ENCODE measurements at regions of chr11 and their contacts with region 1.

Region 1: GRCh38 chr11:6234387-6235107 is at the start of gene FHIP1B:
- DNase-seq: peak; percentile 100
- ATAC-seq: peak; percentile 95
- H3K4me3 Mint-ChIP-seq: peak within 1 kb of the TSS; percentile 95
- H3K27ac Mint-ChIP-seq: peak within 1 kb of the TSS; percentile 93
- H3K4me1 Mint-ChIP-seq: peaks cover 39% of the 10 kb centered on the region
- H3K27me3 Mint-ChIP-seq: no peaks in the 10 kb centered on the region
- total RNA-seq, gene FHIP1B: 17.0 to 17.1 TPM

Region 2: GRCh38 chr11:5624489-5625279 is 609.9 kb before region 1 on chr11 and contains the start of gene TRIM34:
- CTCF ChIA-PET with region 1: no interaction called
- POLR2A ChIA-PET with region 1: no interaction called
- intact Hi-C with region 1: loop called in 1 of 2 experiments (anchors 10 kb)
- DNase-seq: peak; percentile 72
- ATAC-seq: peak; percentile 95
- H3K4me3 Mint-ChIP-seq: peak within 1 kb of the TSS; percentile 87
- H3K27ac Mint-ChIP-seq: peak within 1 kb of the TSS; percentile 95
- H3K4me1 Mint-ChIP-seq: peaks cover 35% of the 10 kb centered on the region
- H3K27me3 Mint-ChIP-seq: no peaks in the 10 kb centered on the region
- total RNA-seq, gene TRIM34: 10.4 to 11.8 TPM

Region 3: DNA sequence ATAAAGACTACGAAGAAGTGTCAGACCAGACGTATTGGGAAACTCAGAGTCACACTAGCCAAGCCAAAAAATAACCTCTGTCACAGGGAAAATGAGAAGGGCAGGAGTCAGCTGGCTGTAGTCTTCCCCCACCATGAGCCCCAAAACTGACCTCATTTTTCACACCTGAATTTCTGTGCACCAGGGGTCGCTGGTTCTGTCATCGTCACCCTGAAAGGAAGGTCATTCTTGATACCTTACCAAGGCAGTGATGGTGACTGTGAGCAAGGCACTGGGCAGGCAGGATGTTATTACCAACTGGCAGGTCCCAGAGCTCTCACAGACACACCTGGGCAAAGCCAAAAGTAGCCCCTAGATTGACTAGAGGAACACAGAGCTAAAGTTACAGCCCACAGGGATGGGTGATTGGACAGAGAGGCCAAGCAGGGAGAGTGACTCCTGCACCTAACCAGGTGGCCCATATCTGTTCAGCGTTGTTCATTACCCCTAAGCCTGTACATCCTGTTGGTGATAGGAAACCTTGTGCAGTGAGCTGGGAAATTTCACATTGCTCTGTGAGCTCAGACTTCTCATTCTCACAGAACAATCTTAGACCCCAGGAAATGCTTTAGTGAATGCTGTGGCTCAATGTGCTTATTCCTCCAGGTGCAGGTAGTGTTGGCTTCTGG is 171.7 kb before region 1 on chr11:
- CTCF ChIA-PET with region 1: no interaction called
- POLR2A ChIA-PET with region 1: no interaction called
- intact Hi-C with region 1: no loop called
- DNase-seq: no peak
- ATAC-seq: no peak
- H3K4me3 Mint-ChIP-seq: no peak overlapping the region
- H3K27ac Mint-ChIP-seq: no peak overlapping the region
- H3K4me1 Mint-ChIP-seq: no peaks in the 10 kb centered on the region
- H3K27me3 Mint-ChIP-seq: peaks cover 6% of the 10 kb centered on the region

Region 4: DNA sequence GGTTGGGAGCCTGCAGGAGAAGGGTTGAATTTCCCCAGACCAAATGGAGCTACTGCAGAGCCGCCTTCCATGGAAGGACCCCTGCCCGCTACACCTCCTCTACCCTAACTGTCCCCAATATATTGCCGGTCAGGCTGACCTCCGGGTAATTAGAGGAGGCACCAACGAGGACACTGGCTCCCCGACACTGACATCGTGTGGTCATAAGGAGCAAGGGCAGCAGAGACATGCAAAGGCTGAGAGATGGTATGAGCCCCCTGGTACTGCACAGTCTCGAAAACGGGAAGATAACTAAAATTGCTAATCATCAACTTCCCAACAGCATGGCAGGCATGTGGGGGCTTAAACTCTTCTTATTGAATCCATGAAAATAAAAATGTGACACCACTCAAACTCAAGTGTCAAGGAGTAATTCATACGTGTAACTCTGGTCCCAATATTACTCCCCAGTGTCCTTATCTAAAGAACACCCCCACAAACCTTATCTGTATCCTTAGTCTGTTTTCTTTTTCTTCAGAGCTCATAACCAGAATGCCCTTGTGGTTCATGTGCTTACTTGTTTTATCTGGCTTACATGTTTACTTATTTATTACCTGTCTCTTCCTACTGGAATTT is 81.4 kb after region 1 on chr11:
- CTCF ChIA-PET with region 1: interaction called, 3 read pairs
- POLR2A ChIA-PET with region 1: no interaction called
- intact Hi-C with region 1: loop called in 1 of 2 experiments (anchors 1 kb)
- DNase-seq: peak; percentile 59
- ATAC-seq: peak; percentile 33
- H3K4me3 Mint-ChIP-seq: no peak overlapping the region
- H3K27ac Mint-ChIP-seq: no peak overlapping the region
- H3K4me1 Mint-ChIP-seq: peaks cover 12% of the 10 kb centered on the region
- H3K27me3 Mint-ChIP-seq: peaks cover 42% of the 10 kb centered on the region

Region 5: DNA sequence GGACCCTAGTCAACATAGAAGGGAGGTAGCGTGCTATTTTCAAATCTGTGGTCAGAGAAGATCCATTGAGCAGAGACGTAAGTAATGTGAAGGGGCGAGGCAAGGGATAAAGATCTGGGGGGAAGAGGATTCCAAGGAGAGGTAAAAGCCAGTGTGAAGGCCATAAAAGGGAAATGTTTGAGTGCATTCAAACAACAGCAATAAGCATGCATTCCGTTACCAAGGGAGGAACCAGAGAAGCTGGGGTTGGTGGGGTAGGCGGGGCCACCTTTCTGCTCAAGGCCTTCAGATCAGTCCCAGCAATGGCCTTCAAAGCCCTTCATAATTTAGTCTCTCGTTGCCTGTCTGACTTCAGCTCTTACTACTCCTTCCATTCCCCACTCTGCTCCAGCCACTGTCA is 137.3 kb after region 1 on chr11:
- CTCF ChIA-PET with region 1: no interaction called
- POLR2A ChIA-PET with region 1: no interaction called
- intact Hi-C with region 1: no loop called
- DNase-seq: no peak
- ATAC-seq: no peak
- H3K4me3 Mint-ChIP-seq: no peak overlapping the region
- H3K27ac Mint-ChIP-seq: no peak overlapping the region
- H3K4me1 Mint-ChIP-seq: peaks cover 4% of the 10 kb centered on the region
- H3K27me3 Mint-ChIP-seq: no peaks in the 10 kb centered on the region

Region 6: GRCh38 chr11:6389921-6390724 is 155.6 kb after region 1 on chr11 and contains the start of gene SMPD1:
- CTCF ChIA-PET with region 1: no interaction called
- POLR2A ChIA-PET with region 1: no interaction called
- intact Hi-C with region 1: loop called (anchors 1 kb)
- DNase-seq: peak; percentile 97
- ATAC-seq: peak; percentile 90
- H3K4me3 Mint-ChIP-seq: peak within 1 kb of the TSS; percentile 77
- H3K27ac Mint-ChIP-seq: peak within 1 kb of the TSS; percentile 93
- H3K4me1 Mint-ChIP-seq: peaks cover 55% of the 10 kb centered on the region
- H3K27me3 Mint-ChIP-seq: no peaks in the 10 kb centered on the region
- total RNA-seq, gene SMPD1: 13.1 to 14.1 TPM

Region 7: GRCh38 chr11:6481012-6481923 is 246.7 kb after region 1 on chr11 and contains the starts of genes ARFIP2 and TIMM10B:
- CTCF ChIA-PET with region 1: interaction called, 3 read pairs
- POLR2A ChIA-PET with region 1: interaction called, 3 read pairs
- intact Hi-C with region 1: loop called (anchors 1 to 2 kb)
- DNase-seq: peak; percentile 99
- ATAC-seq: peak; percentile 98
- H3K4me3 Mint-ChIP-seq: peak within 1 kb of the TSS; percentile 80
- H3K27ac Mint-ChIP-seq: peak within 1 kb of the TSS; percentile 92
- H3K4me1 Mint-ChIP-seq: peaks cover 30% of the 10 kb centered on the region
- H3K27me3 Mint-ChIP-seq: no peaks in the 10 kb centered on the region
- total RNA-seq, gene ARFIP2: 36.7 to 40.3 TPM
- total RNA-seq, gene TIMM10B: 27.1 to 39.2 TPM

Region 8: DNA sequence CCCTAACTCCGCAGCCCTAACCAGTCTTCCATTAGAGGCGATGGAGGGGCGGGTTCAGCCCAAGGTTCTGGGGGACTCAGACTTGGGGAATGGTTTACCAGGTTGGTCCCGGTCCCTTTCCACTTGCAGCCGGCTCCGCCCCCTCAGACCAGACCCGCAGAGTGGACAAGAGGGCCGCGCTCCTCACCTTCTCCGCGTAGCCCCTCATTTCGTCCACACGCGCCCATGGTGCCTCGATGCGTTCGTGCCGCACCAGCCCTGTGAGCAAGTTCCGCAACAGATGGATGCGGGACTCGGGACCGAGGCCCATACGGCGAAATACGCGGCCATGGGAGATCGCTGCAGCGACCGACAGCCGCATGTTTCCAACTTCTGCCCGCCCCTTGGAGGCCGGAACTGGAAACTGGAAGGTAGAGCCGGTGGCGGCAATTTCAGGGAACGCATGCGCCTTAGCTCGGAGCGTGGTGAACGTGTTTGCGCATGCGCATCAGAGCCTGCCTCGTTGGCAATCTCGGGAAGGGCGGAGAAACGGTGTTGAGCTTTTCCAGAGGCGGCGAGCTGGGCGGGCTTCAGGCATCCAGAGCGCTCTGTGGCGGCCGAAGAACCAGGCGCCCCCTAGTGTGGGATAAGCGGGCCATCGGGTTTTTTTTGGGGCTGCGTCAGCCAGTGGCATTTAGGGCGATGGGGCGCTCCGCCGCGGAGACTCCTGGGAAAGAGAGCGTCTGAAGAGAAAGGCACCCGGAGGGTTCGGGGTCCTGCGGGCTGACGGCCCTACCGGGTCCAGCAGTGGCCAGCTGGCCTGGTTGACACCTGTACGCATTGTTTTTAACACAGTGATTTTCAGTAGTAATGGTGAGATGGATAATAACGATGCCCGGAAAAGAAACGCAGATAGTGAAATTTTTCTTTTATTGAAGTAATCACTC is 448.7 kb after region 1 on chr11 and contains the start of gene MRPL17:
- CTCF ChIA-PET with region 1: interaction called, 5 read pairs
- POLR2A ChIA-PET with region 1: no interaction called
- intact Hi-C with region 1: loop called in 1 of 2 experiments (anchors 1 kb)
- DNase-seq: peak; percentile 99
- ATAC-seq: peak; percentile 96
- H3K4me3 Mint-ChIP-seq: peak within 1 kb of the TSS; percentile 97
- H3K27ac Mint-ChIP-seq: peak within 1 kb of the TSS; percentile 100
- H3K4me1 Mint-ChIP-seq: peaks cover 29% of the 10 kb centered on the region
- H3K27me3 Mint-ChIP-seq: no peaks in the 10 kb centered on the region
- total RNA-seq, gene MRPL17: 118 to 156 TPM

Region 9: DNA sequence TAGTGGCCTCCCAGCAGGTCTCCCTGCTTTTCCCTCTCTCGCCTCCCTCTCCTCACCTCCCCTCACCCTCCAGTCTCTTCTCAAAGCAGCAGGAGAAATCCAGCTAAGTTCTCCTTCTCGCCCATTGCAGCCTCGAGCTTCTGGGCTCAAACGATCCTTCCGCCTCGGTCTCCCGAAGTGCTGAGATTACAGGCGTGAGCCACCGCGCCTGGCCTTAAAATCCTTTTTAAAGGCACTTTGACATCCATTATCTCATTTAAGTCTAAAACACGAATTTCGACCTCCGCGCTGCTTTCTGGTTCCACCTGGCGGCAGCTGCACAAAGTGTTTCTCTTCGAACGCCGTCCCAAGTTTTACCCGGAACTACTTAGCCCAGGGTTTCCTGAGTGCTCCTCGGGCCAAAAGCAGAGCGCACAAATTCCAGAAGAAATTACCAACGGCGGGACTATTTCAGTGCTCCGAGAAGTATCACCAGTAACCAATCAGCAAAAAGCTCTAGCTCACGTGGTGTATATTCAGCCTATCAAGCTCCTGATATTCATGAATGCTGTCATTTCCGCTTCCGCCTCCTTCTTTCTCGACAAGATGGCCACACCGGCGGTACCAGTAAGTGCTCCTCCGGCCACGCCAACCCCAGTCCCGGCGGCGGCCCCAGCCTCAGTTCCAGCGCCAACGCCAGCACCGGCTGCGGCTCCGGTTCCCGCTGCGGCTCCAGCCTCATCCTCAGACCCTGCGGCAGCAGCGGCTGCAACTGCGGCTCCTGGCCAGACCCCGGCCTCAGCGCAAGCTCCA is 1752.4 kb after region 1 on chr11 and contains the start of gene EIF3F:
- CTCF ChIA-PET with region 1: no interaction called
- POLR2A ChIA-PET with region 1: no interaction called
- intact Hi-C with region 1: loop called in 1 of 2 experiments (anchors 2 kb)
- DNase-seq: peak; percentile 93
- ATAC-seq: peak; percentile 99
- H3K4me3 Mint-ChIP-seq: peak within 1 kb of the TSS; percentile 94
- H3K27ac Mint-ChIP-seq: peak within 1 kb of the TSS; percentile 99
- H3K4me1 Mint-ChIP-seq: peaks cover 37% of the 10 kb centered on the region
- H3K27me3 Mint-ChIP-seq: no peaks in the 10 kb centered on the region
- total RNA-seq, gene EIF3F: 270 to 289 TPM

Measured in activated CD4-positive, alpha-beta T cell treated with anti-CD3 and anti-CD28 coated beads for 36 hours (primary cell).